B cell (primary cell): ENCODE measurements at regions of chr11 and their contacts with region 1.

Region 1: DNA sequence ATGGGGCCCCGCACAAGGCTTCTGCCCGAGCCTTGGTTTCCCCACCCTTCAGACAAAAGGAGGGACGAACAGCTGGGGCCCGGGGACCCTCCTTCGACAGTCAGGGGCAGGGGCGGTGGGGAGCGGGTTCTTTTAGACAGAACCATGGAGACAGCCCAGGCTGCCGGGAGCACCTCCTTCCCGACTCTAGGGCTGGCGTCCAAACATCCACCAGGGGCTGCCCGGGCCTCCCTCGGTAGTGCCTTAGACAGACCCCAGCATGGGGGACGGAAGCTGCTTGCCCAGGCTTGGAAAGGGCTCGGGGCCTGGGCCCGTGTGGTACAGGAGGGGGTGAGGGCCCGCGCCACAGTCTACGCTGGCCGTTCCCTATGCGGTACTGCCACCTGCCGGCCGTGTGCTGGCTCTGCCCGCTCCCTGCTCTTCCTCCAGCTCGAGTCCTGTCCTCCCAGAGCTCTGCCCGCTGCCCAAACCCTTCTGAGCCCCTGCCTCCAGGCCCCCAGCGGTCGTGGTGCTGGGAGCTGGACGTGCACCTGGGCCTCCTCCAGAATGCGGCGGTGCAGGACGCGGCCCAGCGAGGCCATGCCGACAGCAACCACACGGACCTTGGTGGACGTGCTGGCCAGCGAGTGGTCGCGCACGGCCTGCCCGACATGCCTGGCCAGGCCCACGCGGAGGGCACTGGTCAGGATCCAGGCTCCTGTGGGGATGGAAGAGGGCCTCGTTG is 20.1 kb downstream of the TSSC4 start:
- DNase-seq: peak; percentile 86
- ATAC-seq: peak; percentile 95
- H3K4me3 ChIP-seq: no peak overlapping the region
- H3K4me3 Mint-ChIP-seq: no peak overlapping the region
- H3K27ac ChIP-seq: no peak overlapping the region
- H3K27ac Mint-ChIP-seq: peak overlapping the region; percentile 3
- H3K4me1 ChIP-seq: peaks cover 5 to 15% of the 10 kb centered on the region in 2 donors
- H3K4me1 Mint-ChIP-seq: peaks cover 3% of the 10 kb centered on the region
- H3K27me3 ChIP-seq: peaks cover 0 to 3% (median 0%) of the 10 kb centered on the region in 4 experiments
- H3K27me3 Mint-ChIP-seq: no peaks in the 10 kb centered on the region
- CTCF ChIP-seq: peak; percentile 83

Region 2: DNA sequence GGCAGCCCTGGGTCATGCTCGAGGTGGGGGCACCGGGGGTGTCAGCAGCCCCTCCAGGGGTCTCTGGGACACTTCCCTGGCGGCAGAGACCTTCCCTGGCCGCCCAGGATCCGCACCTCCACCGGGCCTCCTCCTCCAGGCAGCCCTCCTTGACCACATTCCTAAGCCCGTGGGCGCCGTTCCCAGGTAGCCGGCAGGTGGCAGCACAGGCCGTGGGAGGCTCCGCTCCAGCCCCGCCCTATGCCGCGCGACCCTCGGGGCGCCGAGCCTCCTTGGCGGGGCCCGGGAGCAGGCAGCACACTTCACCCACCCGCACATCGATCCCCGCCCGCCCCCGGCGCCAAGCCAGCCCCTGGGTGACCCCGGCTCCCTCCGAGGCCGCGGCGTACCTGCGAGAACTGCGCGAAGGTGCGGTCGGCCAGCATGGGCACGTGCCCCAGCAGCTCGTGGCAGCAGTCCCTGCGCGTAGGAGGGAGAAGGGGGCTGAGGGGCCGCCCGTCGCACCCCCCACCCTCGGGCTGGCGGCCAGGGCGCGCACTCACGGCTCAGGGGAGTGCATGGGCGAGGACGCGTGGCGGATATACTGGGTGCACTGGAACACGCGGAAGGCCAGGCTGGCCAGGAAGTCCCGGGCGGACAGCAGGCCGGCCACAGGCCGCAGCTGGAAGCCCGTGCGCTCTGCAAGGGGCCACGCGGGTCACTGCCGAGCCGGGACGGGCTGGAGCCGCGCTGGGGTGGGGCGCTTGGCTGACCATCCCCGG is 254.4 kb before region 1 on chr11:
- CTCF ChIA-PET with region 1: interaction called, 23 read pairs
- POLR2A ChIA-PET with region 1: no interaction called
- intact Hi-C with region 1: no loop called
- DNase-seq: peak; percentile 59
- ATAC-seq: peak; percentile 64
- H3K4me3 ChIP-seq: no peak overlapping the region
- H3K4me3 Mint-ChIP-seq: no peak overlapping the region
- H3K27ac ChIP-seq: no peak overlapping the region
- H3K27ac Mint-ChIP-seq: no peak overlapping the region
- H3K4me1 ChIP-seq: peaks cover 0 to 3% of the 10 kb centered on the region in 2 donors
- H3K4me1 Mint-ChIP-seq: no peaks in the 10 kb centered on the region
- H3K27me3 ChIP-seq: peaks cover 0 to 10% (median 0%) of the 10 kb centered on the region in 4 experiments
- H3K27me3 Mint-ChIP-seq: no peaks in the 10 kb centered on the region
- CTCF ChIP-seq: peak; percentile 71

Region 3: DNA sequence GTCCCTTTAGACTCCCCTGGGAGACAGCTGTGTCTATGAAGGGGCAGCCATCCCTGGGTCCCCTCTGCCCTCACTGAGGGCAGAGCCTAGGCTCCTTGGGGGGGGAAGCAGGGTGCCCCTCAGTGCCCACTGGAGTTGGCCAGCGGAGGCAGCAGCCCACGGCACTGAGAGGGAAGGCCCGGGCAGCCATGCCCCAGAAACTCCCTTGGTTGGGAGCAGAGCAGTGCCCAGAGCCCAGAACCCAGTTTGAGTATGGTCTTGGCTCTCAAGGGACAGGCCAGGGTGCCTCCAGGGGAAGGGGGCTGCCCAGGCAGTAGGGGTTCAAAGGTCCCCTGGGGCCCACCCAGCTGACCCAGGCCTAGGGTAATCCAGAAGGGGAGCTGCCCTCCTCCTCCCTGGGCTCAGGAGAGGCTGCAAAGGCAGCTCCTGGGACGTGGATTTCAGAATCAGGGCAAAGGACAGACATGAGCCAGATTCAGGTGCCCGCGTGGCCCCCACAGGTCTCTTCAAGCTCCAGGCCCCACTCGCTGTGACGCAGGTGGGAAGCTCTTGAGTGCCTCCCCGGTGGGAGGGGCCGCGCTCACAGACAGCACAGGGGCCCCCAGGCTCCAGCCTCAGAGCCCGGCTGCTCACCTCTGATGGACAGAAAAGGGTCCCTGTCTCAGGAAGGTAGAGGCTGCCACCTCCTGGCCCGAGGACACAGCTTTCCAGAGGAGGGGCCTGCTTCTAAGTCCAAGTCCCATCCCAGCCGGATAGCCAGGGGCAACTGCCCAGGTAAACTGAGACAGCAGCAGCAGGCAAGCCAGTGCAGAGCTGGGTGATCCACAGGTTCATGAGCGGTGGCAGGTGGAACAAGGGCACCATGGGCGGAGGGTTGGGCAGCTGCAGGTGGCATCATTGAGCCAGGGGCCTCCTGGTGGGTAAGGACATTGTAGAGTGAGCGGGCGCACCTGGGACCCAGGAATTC is 121.6 kb before region 1 on chr11:
- CTCF ChIA-PET with region 1: interaction called, 583 read pairs
- POLR2A ChIA-PET with region 1: interaction called, 22 read pairs
- intact Hi-C with region 1: no loop called
- DNase-seq: peak; percentile 52
- ATAC-seq: no peak
- H3K4me3 ChIP-seq: peak overlapping the region in 2 of 5 experiments; percentile 21 to 44
- H3K4me3 Mint-ChIP-seq: peak overlapping the region; percentile 50
- H3K27ac ChIP-seq: peak overlapping the region in 1 of 2 donors; percentile 37
- H3K27ac Mint-ChIP-seq: peak overlapping the region; percentile 88
- H3K4me1 ChIP-seq: peaks cover 51 to 57% of the 10 kb centered on the region in 2 donors
- H3K4me1 Mint-ChIP-seq: peaks cover 58% of the 10 kb centered on the region
- H3K27me3 ChIP-seq: no peaks in the 10 kb centered on the region
- H3K27me3 Mint-ChIP-seq: no peaks in the 10 kb centered on the region
- CTCF ChIP-seq: no peak

Region 4: DNA sequence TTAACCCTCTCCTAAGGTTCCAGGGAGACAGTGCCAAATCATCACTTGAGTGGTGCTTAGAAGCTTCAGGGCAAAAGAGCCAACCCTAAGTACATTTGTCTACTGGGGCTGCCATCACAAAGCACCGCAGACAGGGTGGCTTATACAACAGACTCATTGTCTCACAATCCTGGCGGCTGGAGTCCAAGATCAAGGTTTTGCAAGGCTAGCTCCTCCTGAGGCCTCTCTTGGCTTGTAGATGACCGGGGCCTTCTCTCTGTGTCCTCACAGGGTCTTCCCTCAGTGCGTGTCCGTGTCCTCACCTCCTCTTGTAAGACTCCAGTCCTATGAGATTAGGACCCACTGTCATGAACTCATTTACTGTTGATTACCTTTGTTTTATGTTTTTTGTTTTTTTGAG is 77.7 kb before region 1 on chr11:
- CTCF ChIA-PET with region 1: interaction called, 26 read pairs
- POLR2A ChIA-PET with region 1: no interaction called
- intact Hi-C with region 1: loop called (anchors 1 kb)
- DNase-seq: no peak
- ATAC-seq: no peak
- H3K4me3 ChIP-seq: no peak overlapping the region
- H3K4me3 Mint-ChIP-seq: no peak overlapping the region
- H3K27ac ChIP-seq: no peak overlapping the region
- H3K27ac Mint-ChIP-seq: no peak overlapping the region
- H3K4me1 ChIP-seq: no peaks in the 10 kb centered on the region
- H3K4me1 Mint-ChIP-seq: peaks cover 4% of the 10 kb centered on the region
- H3K27me3 ChIP-seq: no peaks in the 10 kb centered on the region
- H3K27me3 Mint-ChIP-seq: no peaks in the 10 kb centered on the region
- CTCF ChIP-seq: no peak

Region 5: GRCh38 chr11:2409611-2410468 is 10.8 kb before region 1 on chr11:
- CTCF ChIA-PET with region 1: interaction called, 15 read pairs
- POLR2A ChIA-PET with region 1: no interaction called
- intact Hi-C with region 1: no loop called
- DNase-seq: no peak
- ATAC-seq: no peak
- H3K4me3 ChIP-seq: no peak overlapping the region
- H3K4me3 Mint-ChIP-seq: no peak overlapping the region
- H3K27ac ChIP-seq: no peak overlapping the region
- H3K27ac Mint-ChIP-seq: no peak overlapping the region
- H3K4me1 ChIP-seq: no peaks in the 10 kb centered on the region
- H3K4me1 Mint-ChIP-seq: no peaks in the 10 kb centered on the region
- H3K27me3 ChIP-seq: no peaks in the 10 kb centered on the region
- H3K27me3 Mint-ChIP-seq: no peaks in the 10 kb centered on the region
- CTCF ChIP-seq: no peak